Activated CD4-positive, alpha-beta T cell treated with anti-CD3 and anti-CD28 coated beads for 36 hours (primary cell): ENCODE measurements at regions of chr10 and their contacts with region 1.

Region 1: GRCh38 chr10:11440250-11441150 is 170.9 kb downstream of the USP6NL start:
- DNase-seq: peak; percentile 75
- ATAC-seq: peak; percentile 86
- H3K4me3 Mint-ChIP-seq: peak overlapping the region; percentile 66
- H3K27ac Mint-ChIP-seq: peak overlapping the region; percentile 95
- H3K4me1 Mint-ChIP-seq: peaks cover 40% of the 10 kb centered on the region
- H3K27me3 Mint-ChIP-seq: no peaks in the 10 kb centered on the region

Region 2: GRCh38 chr10:11401264-11402235 is 39.0 kb before region 1 on chr10:
- CTCF ChIA-PET with region 1: no interaction called
- POLR2A ChIA-PET with region 1: no interaction called
- intact Hi-C with region 1: loop called in 1 of 2 experiments (anchors 2 kb)
- DNase-seq: peak; percentile 30
- ATAC-seq: no peak
- H3K4me3 Mint-ChIP-seq: no peak overlapping the region
- H3K27ac Mint-ChIP-seq: peak overlapping the region; percentile 90
- H3K4me1 Mint-ChIP-seq: peaks cover 49% of the 10 kb centered on the region
- H3K27me3 Mint-ChIP-seq: no peaks in the 10 kb centered on the region

Region 3: GRCh38 chr10:11468126-11468742 is 27.7 kb after region 1 on chr10:
- CTCF ChIA-PET with region 1: no interaction called
- POLR2A ChIA-PET with region 1: no interaction called
- intact Hi-C with region 1: no loop called
- DNase-seq: no peak
- ATAC-seq: no peak
- H3K4me3 Mint-ChIP-seq: no peak overlapping the region
- H3K27ac Mint-ChIP-seq: no peak overlapping the region
- H3K4me1 Mint-ChIP-seq: peaks cover 1% of the 10 kb centered on the region
- H3K27me3 Mint-ChIP-seq: no peaks in the 10 kb centered on the region